Calu3 (cell line): ENCODE measurements at regions of chr3 and their contacts with region 1.

Region 1: DNA sequence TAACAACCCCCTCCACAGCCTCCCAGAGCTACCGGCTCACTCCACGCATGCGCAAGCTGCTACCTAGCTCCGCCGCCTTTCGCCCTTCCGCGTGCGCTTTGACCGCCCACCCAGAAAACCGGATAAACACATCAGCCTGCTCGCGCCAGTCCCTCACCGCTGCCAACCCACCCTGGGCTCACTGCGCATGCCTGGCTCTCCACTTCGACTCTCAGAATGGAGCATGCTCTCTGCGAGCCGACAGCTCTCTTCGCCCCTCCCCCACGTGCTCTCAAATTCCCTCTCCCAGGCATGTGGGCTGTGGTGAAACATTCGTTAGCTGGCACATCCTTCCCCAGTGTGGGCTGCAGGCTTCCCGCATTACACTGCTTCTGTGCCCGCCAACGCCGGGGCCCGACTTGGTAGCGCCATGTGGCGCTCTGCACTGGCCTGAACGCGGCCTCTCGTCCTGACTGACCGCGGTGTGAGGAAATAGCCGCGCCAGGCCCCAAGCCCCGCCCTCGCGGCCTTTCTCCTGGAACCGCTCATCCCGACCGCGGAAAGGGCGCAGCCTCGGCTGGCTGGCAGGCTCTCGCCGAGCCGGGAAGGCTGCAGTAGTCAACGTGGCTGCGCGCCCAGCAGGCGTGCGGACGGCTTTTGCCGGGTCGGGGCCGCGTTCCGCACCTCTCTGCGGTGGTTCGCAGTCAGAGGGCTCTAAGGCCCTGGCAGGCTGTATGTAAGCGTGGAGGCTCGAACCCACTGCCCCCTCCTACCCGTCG is 445 bp upstream of the MSL2 start:
- DNase-seq: peak; percentile 100
- H3K4me3 Mint-ChIP-seq: peak overlapping the region; percentile 78
- H3K27ac Mint-ChIP-seq: peak overlapping the region; percentile 91
- H3K4me1 Mint-ChIP-seq: peaks cover 19% of the 10 kb centered on the region
- H3K27me3 Mint-ChIP-seq: no peaks in the 10 kb centered on the region
- CTCF ChIP-seq: no peak

Region 2: DNA sequence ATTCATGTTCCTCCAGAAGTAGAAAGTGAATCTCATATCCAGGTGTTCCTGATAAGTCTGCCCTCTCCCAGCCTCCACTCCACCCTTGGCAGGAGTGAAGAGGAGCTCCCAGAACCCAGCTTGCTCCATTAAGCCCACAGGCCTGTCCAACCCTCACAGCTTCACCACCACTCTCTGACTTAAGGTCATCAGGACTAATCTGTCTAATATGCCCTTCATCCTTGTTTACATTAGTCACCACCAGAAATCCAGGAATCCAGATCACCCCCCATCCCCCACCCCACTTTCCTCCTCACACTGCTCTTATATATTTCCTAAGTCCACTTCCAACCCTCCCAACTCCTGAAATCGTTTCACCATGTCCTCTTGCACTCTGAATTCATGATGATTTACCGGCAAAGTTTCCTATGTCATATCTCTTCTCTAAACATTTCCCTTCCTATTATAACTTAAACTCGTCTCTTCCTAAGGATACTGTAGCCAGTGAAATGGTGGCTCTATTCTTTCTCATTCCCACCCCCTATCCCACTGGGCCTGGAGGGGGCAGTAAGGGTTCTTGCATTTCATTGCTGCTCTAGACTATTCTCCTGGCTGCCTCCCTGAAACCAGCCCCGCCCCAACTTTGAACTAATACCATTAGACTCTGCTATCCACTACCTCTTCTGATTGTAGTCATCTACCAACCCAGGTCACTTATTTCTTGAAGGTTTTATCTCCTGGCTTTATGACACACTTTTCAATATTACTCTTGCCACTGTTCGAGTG is 187.7 kb before region 1 on chr3:
- CTCF ChIA-PET with region 1: no interaction called
- intact Hi-C with region 1: loop called (anchors 10 kb)
- DNase-seq: no peak
- H3K4me3 Mint-ChIP-seq: no peak overlapping the region
- H3K27ac Mint-ChIP-seq: peak overlapping the region; percentile 3
- H3K4me1 Mint-ChIP-seq: peaks cover 42% of the 10 kb centered on the region
- H3K27me3 Mint-ChIP-seq: no peaks in the 10 kb centered on the region
- CTCF ChIP-seq: no peak

Region 3: DNA sequence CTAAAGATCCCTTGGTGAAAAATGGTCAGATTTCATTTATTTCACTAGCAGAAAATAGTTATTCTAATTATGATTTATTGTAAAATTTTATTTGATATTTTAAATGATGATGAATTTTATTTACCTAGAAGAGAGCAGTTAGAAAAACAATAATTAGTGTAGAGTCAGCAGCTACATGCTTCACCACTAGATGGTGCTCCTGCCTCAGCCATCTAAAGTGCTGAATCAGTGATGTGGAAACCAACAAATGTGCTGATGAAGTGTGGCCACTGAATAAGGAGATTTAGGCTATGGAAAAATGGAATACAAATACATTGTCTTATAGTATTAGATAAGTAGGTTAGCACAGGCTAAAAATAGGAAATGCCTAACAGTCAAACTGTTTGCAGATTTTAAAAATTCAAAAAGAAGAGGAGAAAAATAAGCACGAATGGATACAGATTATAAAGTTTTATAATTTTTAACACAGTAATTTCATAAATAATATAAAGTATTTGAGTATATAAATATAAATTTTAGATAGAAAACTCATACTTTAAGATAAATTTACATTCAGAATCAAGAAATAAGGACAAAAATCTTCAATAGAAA is 121.3 kb before region 1 on chr3:
- CTCF ChIA-PET with region 1: interaction called, 3 read pairs
- intact Hi-C with region 1: loop called (anchors 2 kb)
- DNase-seq: peak; percentile 81
- H3K4me3 Mint-ChIP-seq: no peak overlapping the region
- H3K27ac Mint-ChIP-seq: no peak overlapping the region
- H3K4me1 Mint-ChIP-seq: peaks cover 8% of the 10 kb centered on the region
- H3K27me3 Mint-ChIP-seq: no peaks in the 10 kb centered on the region
- CTCF ChIP-seq: peak; percentile 85

Region 4: GRCh38 chr3:136149667-136150066 is 46.9 kb before region 1 on chr3:
- CTCF ChIA-PET with region 1: interaction called, 3 read pairs
- intact Hi-C with region 1: loop called (anchors 2 kb)
- DNase-seq: no peak
- H3K4me3 Mint-ChIP-seq: no peak overlapping the region
- H3K27ac Mint-ChIP-seq: peak overlapping the region; percentile 37
- H3K4me1 Mint-ChIP-seq: peaks cover 35% of the 10 kb centered on the region
- H3K27me3 Mint-ChIP-seq: no peaks in the 10 kb centered on the region
- CTCF ChIP-seq: no peak

Region 5: GRCh38 chr3:136186344-136186743 is 10.2 kb before region 1 on chr3:
- CTCF ChIA-PET with region 1: interaction called, 18 read pairs
- intact Hi-C with region 1: loop called (anchors 1 kb)
- DNase-seq: peak; percentile 68
- H3K4me3 Mint-ChIP-seq: no peak overlapping the region
- H3K27ac Mint-ChIP-seq: peak overlapping the region; percentile 48
- H3K4me1 Mint-ChIP-seq: peaks cover 74% of the 10 kb centered on the region
- H3K27me3 Mint-ChIP-seq: no peaks in the 10 kb centered on the region
- CTCF ChIP-seq: no peak

Region 6: GRCh38 chr3:136250226-136250902 is 53.8 kb after region 1 on chr3 and contains the start of gene PCCB:
- CTCF ChIA-PET with region 1: interaction called, 5 read pairs
- intact Hi-C with region 1: loop called (anchors 1 kb)
- DNase-seq: peak; percentile 99
- H3K4me3 Mint-ChIP-seq: peak within 1 kb of the TSS; percentile 89
- H3K27ac Mint-ChIP-seq: peak within 1 kb of the TSS; percentile 96
- H3K4me1 Mint-ChIP-seq: peaks cover 26% of the 10 kb centered on the region
- H3K27me3 Mint-ChIP-seq: no peaks in the 10 kb centered on the region
- CTCF ChIP-seq: peak; percentile 94
- total RNA-seq, gene PCCB: 52.3 and 63.5 TPM in 2 replicates

Region 7: DNA sequence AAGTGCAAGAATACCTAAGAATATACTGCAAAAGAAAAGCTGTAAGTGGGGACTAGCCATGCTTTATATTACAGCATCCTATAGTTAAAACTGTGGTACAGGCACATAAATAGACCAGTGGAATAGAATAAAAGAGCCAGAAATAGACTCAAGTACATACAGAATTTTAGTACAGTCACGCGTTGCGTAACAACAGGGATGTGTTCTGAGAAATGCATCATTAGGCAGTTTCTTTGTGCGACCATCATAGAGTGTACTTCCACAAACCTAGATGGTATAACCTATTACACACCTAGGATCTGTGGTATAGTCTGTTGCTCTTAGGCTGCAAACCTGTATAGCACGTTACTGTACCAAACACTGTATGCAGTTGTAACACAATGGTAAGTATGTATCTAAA is 115.4 kb after region 1 on chr3:
- CTCF ChIA-PET with region 1: no interaction called
- intact Hi-C with region 1: no loop called
- DNase-seq: no peak
- H3K4me3 Mint-ChIP-seq: no peak overlapping the region
- H3K27ac Mint-ChIP-seq: no peak overlapping the region
- H3K4me1 Mint-ChIP-seq: no peaks in the 10 kb centered on the region
- H3K27me3 Mint-ChIP-seq: no peaks in the 10 kb centered on the region
- CTCF ChIP-seq: no peak